Activated CD4-positive, alpha-beta T cell treated with anti-CD3 and anti-CD28 coated beads for 36 hours (primary cell): ENCODE measurements at regions of chr17 and their contacts with region 1.

Region 1: DNA sequence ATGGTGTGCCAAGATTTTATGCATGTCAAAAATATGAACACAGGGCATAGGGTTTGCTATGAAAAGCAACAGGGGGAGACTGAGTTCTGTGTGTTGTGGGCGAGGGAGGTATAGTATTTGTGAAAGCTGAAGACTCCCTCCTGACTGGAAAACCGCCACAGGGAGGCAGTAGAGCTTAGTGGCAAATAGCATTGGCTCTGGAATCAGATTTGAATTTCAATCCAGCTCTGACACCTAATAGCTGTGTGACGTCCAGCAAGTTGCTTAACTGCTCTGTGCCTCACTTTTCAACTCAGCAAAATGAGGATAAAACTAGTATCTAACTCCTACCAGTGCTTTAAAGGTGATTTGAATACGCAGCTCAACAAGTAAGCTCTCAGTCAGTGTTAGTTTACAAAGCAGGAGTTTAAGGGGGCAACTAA is 22.0 kb downstream of the KPNA2 start:
- DNase-seq: peak; percentile 62
- ATAC-seq: peak; percentile 88
- H3K4me3 Mint-ChIP-seq: no peak overlapping the region
- H3K27ac Mint-ChIP-seq: no peak overlapping the region
- H3K4me1 Mint-ChIP-seq: no peaks in the 10 kb centered on the region
- H3K27me3 Mint-ChIP-seq: no peaks in the 10 kb centered on the region

Region 2: GRCh38 chr17:67947325-67947813 is 110.2 kb before region 1 on chr17:
- CTCF ChIA-PET with region 1: no interaction called
- POLR2A ChIA-PET with region 1: no interaction called
- intact Hi-C with region 1: no loop called
- DNase-seq: no peak
- ATAC-seq: no peak
- H3K4me3 Mint-ChIP-seq: no peak overlapping the region
- H3K27ac Mint-ChIP-seq: no peak overlapping the region
- H3K4me1 Mint-ChIP-seq: no peaks in the 10 kb centered on the region
- H3K27me3 Mint-ChIP-seq: no peaks in the 10 kb centered on the region

Region 3: DNA sequence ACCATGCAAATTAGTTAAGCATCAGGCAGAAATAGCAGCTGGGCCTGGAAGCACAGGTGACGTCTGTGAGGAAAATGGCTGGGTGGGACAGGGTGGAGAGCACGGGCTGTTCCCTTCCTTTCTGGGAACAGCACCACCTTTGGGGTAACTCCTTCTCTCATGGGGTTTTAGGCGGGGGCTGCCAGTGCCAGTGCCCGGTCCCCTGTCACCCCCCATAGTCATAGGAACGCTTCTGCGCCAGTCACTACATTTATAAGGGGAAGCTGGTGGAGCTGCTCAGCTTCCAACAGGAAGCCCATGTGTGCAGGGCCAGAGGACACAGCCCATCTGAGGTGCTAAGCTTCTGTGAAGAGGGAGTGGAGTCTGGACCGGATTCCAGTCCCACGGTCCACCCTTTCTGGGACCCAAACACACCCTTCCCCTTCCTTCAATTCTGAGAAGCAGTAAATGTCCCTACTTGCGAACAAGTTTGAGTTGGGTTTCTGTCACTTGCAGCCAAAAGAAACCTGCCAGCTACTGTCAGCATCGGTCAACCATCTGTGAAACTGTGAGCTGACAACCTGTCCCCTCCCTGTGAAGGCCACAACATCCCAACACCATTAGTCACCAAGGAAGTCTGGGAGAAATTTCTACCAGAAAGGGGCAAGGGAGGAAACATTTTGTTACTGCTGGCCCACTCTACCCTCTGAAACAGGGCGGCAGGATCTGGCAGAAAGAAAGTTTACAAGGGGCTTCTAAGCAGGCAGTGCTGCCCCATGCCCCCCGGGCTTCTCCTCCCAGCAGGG is 104.3 kb after region 1 on chr17:
- CTCF ChIA-PET with region 1: no interaction called
- POLR2A ChIA-PET with region 1: no interaction called
- intact Hi-C with region 1: loop called (anchors 5 to 10 kb)
- DNase-seq: no peak
- ATAC-seq: no peak
- H3K4me3 Mint-ChIP-seq: no peak overlapping the region
- H3K27ac Mint-ChIP-seq: no peak overlapping the region
- H3K4me1 Mint-ChIP-seq: peaks cover 3% of the 10 kb centered on the region
- H3K27me3 Mint-ChIP-seq: no peaks in the 10 kb centered on the region

Region 4: DNA sequence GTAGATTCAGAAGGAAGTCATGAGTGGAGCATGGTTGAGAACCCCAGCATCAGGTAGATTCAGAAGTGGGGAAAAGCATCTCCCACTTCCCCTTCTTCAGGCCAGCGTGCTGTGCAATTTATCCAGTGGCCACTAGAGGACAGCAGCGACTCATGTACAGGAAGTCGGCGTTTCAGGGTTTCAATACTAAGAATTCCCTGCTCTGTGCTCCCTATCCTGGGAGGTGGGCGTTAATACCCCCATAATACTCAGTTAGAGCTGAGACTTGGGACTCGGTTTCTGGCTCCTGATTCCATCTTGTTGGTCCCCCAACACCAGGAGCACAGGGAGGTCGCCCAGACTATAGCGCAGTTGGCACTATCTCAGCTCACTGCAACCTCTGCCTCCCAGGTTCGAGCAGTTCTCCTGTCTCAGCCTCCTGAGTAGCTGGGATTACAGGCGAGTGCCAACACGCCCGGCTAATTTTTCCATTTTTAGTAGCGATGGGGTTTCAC is 115.0 kb after region 1 on chr17:
- CTCF ChIA-PET with region 1: no interaction called
- POLR2A ChIA-PET with region 1: no interaction called
- intact Hi-C with region 1: loop called (anchors 5 to 10 kb)
- DNase-seq: peak; percentile 84
- ATAC-seq: peak; percentile 69
- H3K4me3 Mint-ChIP-seq: no peak overlapping the region
- H3K27ac Mint-ChIP-seq: no peak overlapping the region
- H3K4me1 Mint-ChIP-seq: peaks cover 17% of the 10 kb centered on the region
- H3K27me3 Mint-ChIP-seq: no peaks in the 10 kb centered on the region